AG04450 (cell line): ENCODE measurements at regions of chr6 and their contacts with region 1.

Region 1: DNA sequence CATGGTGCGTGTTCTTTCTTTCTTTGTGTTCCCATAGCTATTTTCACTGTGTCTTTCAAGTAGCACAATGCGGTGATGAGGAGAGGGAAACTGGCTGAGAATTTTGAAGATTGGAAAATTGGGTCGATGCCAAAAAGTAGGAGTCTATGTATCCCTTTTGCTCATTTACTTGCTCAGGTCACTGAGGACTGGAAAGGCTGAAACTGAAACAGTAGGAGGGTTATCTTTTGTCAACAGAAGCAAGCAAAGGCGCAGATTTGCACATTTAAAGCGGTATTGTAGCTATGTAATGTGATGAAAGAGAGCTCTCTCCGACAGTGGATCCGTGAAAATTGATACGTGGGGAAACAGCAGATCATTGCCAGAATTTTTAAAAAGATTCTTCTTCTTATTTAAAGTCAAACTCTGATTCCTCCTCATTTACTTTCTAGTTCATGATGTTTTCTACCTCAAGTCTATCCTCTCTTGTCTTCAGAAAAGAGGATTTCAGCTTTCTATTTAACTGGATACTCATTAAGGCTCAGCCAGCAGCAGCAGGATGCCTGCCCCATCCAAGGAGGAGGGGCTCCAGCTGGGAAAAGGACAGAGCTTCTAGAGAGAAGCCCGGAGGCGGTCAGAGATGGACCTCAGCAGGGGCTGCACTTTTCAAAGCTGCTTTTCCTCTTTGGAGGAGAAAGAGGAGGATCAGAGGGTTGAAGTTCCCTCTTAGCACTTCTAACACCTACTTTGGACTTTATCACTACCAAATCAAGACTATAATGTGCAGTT is 15.9 kb upstream of the FYN start:
- DNase-seq: no peak
- H3K4me3 ChIP-seq: no peak overlapping the region
- H3K27ac ChIP-seq: no peak overlapping the region
- H3K27me3 ChIP-seq: no peaks in the 10 kb centered on the region
- CTCF ChIP-seq: no peak

Region 2: GRCh38 chr6:110101885-110102284 is 1787.2 kb before region 1 on chr6:
- CTCF ChIA-PET with region 1: no interaction called
- POLR2A ChIA-PET with region 1: interaction called, 10 read pairs
- DNase-seq: no peak
- H3K4me3 ChIP-seq: no peak overlapping the region
- H3K27ac ChIP-seq: no peak overlapping the region
- H3K27me3 ChIP-seq: no peaks in the 10 kb centered on the region
- CTCF ChIP-seq: no peak